Activated T-helper 2 cell treated with anti-CD3 and anti-CD28 coated beads, Interferon-gamma antibody, Interleukin-2, Interleukin-4, amounts not matched to agents 10 μg/mL and 5 μg/mL and 100 μg/mL, durations not matched to agents 14 hours and 24 hours and 36 hours (primary cell): ENCODE measurements at regions of chr17 and their contacts with region 1.

Region 1: DNA sequence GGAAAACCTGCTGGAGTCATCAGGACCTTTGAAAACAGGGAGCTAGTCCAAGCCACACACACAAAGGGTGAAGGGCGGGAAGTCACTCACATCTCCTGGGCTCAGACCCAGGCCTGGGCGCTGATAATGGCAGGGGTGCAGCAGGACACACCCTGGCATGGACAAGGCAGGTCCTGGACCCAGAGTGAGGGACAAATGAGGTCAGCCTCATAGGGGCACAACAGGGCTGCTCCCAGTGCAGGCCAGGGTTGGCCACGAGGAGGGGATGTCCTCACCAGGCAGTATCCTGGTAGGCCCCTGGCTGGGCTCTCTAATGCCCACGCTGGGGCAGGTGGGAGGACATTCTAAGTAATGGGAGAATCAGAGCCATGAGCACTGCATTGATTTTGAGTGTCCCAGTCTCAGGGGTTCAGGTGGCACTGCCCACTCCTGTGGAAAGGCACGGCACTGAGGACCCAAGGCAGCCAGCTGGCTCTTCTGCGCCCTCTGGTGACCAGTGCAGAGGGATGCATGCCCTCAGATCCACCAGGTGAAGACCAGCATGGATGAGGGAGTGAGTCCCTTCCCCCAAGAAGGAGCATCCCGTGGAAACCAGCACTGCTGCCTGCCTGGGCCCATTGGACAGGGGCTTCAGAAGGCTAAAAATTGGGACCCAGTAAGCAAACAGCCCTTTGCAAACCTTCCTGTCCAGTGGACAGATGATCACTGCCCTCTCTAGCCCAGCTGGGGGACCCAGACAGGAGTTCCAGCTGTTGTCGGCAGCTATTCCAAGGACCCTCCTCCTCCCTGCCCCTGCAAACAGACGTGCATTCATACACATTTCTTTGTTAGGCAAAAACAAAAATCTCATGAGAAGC is 23.4 kb upstream of the SREBF1 start:
- DNase-seq: peak; percentile 50
- H3K4me3 Mint-ChIP-seq: no peak overlapping the region
- H3K27ac Mint-ChIP-seq: no peak overlapping the region
- H3K4me1 Mint-ChIP-seq: peaks cover 20% of the 10 kb centered on the region
- H3K27me3 Mint-ChIP-seq: no peaks in the 10 kb centered on the region

Region 2: DNA sequence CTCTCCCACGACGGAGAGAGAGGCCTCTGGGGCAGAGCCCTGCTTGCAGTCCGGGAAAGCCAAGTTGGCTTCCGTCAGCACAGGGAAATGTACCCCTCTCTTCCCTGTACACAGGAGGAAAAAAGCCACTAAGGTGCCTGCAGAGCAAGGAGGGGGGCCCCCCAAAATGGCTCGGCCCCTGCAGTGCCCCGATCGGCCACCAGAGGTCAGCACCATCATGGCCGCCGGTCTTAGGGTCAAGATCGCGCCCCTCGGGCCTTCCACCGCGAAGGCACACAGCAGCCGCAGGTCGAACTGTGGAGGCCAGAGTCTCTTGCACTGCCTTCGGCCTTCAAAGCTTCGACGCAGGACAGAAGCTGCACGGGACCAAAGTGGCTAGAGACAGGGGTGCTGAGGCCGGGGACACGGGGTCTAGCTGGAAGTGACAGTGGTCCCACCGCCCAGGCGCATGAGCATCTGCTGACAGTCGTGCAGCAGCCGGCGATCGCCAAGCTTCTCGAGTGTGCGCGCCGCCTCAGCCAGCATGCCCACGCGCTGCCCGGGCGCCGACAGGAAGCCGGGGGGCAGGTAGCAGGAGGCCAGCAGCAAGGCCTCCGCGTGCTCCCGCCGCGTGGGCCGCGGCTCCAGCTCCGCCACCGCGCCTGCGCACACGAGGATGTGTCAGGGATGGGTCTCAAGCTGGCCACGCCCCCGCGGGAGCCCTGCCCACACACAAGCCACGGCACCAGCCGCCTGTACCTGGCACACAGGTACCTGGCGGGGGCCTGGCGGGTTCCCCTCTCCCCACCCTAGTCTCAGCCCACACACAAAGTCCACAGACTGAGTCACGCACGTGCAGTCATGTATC is 47.7 kb before region 1 on chr17:
- intact Hi-C with region 1: loop called (anchors 1 kb)
- DNase-seq: peak; percentile 49
- H3K4me3 Mint-ChIP-seq: no peak overlapping the region
- H3K27ac Mint-ChIP-seq: no peak overlapping the region
- H3K4me1 Mint-ChIP-seq: peaks cover 9% of the 10 kb centered on the region
- H3K27me3 Mint-ChIP-seq: no peaks in the 10 kb centered on the region

Region 3: DNA sequence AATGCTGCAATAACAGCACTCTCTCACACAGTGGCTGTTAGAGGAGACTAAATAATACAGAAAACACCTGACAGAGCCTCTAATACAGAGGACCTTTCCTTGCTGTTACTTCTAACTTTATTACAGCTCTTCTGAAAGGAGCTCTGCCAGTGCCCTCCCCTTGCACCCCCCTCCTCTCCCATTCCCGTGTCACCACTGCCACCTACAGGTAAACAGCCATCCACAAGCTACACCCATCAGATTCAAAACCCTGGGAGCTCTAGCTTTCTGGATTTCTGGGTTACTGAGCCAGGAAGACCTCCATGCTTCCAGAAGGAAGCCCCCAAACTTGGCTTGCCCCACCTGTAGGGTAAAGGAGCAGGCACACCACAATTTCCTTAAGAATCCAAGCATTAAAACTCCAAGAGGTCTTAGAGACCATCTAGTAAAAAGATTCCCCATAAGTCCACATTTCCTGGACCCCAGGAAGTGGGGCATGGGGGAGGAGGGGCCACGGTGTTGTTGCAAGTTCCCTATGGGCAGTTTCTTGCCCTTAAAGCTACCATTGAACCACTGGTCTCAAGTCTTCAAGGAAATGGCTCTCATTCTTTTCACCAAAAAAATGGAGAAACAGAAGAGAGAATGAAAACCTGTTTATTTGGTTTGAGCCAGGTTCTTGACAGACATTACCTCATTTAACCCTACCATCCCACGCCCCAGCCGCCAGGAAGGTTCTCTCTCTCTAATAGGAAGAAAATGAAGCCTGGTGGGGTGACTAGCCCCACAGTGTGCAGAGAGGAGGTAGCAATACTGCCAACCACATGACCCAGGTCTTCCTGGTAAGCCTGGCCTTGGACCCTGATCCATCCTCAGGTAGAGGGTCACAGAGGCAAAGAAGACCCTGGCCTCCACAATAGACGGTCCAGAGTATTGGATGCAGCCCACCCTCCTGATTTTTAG is 59.3 kb after region 1 on chr17:
- intact Hi-C with region 1: loop called (anchors 10 kb)
- DNase-seq: peak; percentile 34
- H3K4me3 Mint-ChIP-seq: no peak overlapping the region
- H3K27ac Mint-ChIP-seq: no peak overlapping the region
- H3K4me1 Mint-ChIP-seq: peaks cover 5% of the 10 kb centered on the region
- H3K27me3 Mint-ChIP-seq: no peaks in the 10 kb centered on the region